CD8-positive, alpha-beta T cell (primary cell): ENCODE measurements at regions of chr7 and their contacts with region 1.

Region 1: DNA sequence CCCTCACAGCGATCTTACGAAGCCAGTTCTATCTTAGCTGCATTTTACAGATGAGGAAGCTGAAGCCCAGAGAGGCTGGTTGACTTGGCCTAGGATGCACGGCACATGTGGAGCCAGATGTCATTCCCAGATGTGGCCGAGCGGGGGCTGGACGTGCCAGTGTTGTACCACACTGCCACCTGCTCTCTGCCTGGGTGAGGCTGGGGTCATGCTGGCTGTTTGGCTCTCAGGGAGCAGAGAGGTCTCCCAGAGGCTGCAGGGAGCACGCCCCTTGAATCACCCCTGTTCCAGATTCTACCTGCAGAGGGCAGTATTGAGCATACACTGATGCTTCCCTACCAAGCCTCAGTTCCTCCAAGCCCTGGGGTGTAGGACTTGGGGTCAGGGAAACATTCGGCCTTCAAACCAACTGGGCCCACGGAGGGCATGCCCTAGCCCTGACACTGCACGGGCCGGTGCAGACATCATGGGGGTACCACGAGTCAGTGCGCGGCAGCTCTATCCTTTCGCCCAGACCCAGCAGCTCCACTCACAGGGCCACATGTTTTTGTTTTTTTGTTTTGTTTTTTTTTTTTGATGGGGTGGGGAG is 3.8 kb upstream of the GTF2IRD1 start:
- DNase-seq: peak; percentile 38 to 80 (median 69)
- ATAC-seq: no peak
- H3K4me3 ChIP-seq: no peak overlapping the region
- H3K4me3 Mint-ChIP-seq: no peak overlapping the region
- H3K27ac ChIP-seq: no peak overlapping the region
- H3K27ac Mint-ChIP-seq: no peak overlapping the region
- H3K4me1 ChIP-seq: peaks cover 14% of the 10 kb centered on the region
- H3K4me1 Mint-ChIP-seq: peaks cover 14% of the 10 kb centered on the region
- H3K27me3 ChIP-seq: peaks cover 0 to 10% of the 10 kb centered on the region in 2 experiments
- H3K27me3 Mint-ChIP-seq: peaks cover 5% of the 10 kb centered on the region
- CTCF ChIP-seq: peak; percentile 76

Region 2: DNA sequence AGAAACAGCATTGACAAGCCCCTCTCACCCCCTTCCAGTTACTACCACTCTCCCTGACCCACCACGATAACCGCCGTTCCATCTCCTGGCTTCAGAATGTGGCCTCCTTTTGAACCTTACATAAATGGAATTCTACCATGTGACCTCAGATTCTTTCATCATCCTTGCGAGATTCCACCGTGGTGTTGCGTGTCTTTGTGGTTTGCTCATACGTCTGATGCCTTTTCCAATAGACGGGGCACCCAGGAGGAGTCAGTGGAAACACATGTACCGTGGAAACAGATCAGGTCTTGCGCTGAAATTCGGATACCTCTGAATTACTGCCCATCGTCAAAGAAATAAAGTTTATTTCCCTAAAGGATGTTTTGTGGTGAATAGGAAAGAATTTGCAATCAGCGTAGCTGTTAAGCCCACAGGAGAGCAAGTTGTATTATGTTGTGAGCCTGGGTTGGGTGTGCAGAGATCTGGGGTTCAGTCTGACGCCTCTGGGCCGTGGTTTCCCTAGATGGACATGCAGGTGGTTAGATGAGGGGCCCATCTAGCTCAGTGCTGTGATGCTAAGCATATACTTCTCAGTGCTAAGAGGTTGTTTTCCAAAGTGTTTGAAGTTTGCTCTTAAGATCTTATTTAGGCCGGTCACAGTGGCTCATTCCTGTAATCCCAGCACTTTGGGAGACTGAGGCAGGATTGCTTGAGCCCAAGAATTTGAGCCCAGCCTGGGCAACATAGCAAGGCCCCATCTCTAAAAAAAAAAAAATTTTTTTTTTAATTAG is 32.9 kb after region 1 on chr7:
- CTCF ChIA-PET with region 1: no interaction called
- POLR2A ChIA-PET with region 1: no interaction called
- intact Hi-C with region 1: no loop called
- DNase-seq: no peak
- ATAC-seq: no peak
- H3K4me3 ChIP-seq: no peak overlapping the region
- H3K4me3 Mint-ChIP-seq: no peak overlapping the region
- H3K27ac ChIP-seq: no peak overlapping the region
- H3K27ac Mint-ChIP-seq: no peak overlapping the region
- H3K4me1 ChIP-seq: no peaks in the 10 kb centered on the region
- H3K4me1 Mint-ChIP-seq: no peaks in the 10 kb centered on the region
- H3K27me3 ChIP-seq: no peaks in the 10 kb centered on the region
- H3K27me3 Mint-ChIP-seq: peaks cover 9% of the 10 kb centered on the region
- CTCF ChIP-seq: no peak

Region 3: GRCh38 chr7:74569501-74570075 is 119.7 kb after region 1 on chr7:
- CTCF ChIA-PET with region 1: interaction called, 23 read pairs
- POLR2A ChIA-PET with region 1: no interaction called
- intact Hi-C with region 1: loop called (anchors 1 kb)
- DNase-seq: no peak
- ATAC-seq: no peak
- H3K4me3 ChIP-seq: no peak overlapping the region
- H3K4me3 Mint-ChIP-seq: no peak overlapping the region
- H3K27ac ChIP-seq: no peak overlapping the region
- H3K27ac Mint-ChIP-seq: no peak overlapping the region
- H3K4me1 ChIP-seq: no peaks in the 10 kb centered on the region
- H3K4me1 Mint-ChIP-seq: no peaks in the 10 kb centered on the region
- H3K27me3 ChIP-seq: peaks cover 0 to 2% of the 10 kb centered on the region in 2 experiments
- H3K27me3 Mint-ChIP-seq: no peaks in the 10 kb centered on the region
- CTCF ChIP-seq: no peak

Region 4: DNA sequence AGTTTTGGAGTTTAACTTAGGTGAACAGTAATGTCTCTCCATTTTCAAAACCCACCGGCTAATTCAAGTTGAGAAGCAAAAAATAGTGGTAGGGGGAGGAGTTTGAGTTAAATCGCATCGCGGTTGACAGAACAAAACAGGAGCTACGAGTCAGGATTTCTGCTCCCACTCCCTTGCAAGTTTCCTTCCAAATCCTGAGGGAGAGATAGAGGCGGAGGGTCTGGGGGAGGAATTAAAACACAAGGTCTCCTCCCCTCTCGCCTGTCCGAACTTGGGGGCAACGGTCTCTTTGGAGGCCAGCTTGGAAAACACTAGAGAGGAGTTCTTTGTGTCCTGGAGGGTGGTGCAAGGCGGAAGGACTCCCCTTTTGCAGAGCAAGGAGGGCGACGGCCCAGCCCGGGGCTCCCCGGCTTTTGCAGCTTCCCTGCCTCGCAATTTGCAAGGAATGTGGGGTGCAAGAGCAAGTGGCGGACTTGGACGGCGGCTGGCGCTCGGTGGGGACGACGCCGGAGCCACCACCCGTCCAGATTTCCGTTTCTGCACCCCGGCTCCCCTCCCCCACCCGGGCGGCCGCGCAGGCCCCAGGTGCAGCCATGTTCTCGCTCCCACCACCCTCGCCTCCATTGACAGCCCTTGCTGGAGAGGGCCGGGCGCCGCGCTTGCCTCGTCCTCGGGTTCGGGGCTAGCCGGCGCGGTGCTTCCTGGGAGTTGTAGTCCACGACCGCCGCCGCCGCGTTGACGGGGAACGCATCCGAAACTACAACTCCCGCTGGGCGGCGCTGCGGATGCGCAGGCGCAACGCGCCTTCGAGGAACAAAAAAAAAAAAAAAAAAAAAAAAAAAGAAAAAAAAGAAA is 207.2 kb after region 1 on chr7:
- CTCF ChIA-PET with region 1: no interaction called
- POLR2A ChIA-PET with region 1: no interaction called
- intact Hi-C with region 1: loop called (anchors 2 to 5 kb)
- DNase-seq: peak; percentile 95 to 99 (median 98)
- ATAC-seq: peak; percentile 74
- H3K4me3 ChIP-seq: peak overlapping the region; percentile 77 to 88
- H3K4me3 Mint-ChIP-seq: peak overlapping the region; percentile 88
- H3K27ac ChIP-seq: peak overlapping the region; percentile 54 to 69
- H3K27ac Mint-ChIP-seq: peak overlapping the region; percentile 85
- H3K4me1 ChIP-seq: peaks cover 33% of the 10 kb centered on the region
- H3K4me1 Mint-ChIP-seq: peaks cover 45% of the 10 kb centered on the region
- H3K27me3 ChIP-seq: no peaks in the 10 kb centered on the region
- H3K27me3 Mint-ChIP-seq: no peaks in the 10 kb centered on the region
- CTCF ChIP-seq: no peak